Adrenal gland (tissue), 19 donors: ENCODE measurements at regions of chr21 and their contacts with region 1.

Region 1: GRCh38 chr21:28342212-28342810 is 650.4 kb downstream of the LTN1 start:
- DNase-seq: no peak
- H3K4me3 ChIP-seq: no peak overlapping the region
- H3K27ac ChIP-seq: no peak overlapping the region
- H3K4me1 ChIP-seq: no peaks in the 10 kb centered on the region
- H3K27me3 ChIP-seq: no peaks in the 10 kb centered on the region
- CTCF ChIP-seq: no peak
- POLR2A ChIP-seq: no peak

Region 2: DNA sequence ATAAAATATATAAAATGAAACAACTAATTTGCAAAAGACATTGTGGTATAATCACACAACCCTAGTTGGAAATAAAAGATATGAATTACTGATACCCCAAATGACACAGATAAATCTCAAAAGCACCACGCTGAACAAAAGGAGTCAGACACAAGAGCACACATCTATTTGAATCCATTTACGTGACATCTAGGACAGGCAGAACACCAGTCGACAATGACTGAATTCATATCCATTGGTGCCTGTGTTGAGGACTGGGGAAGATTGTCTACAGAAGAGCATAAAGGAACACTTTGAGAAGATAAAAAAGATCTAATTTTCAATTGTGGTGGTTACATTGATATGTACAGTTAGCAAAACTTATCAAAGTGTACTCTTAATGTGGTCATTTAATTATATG is 223.7 kb before region 1 on chr21:
- intact Hi-C with region 1: no loop called
- DNase-seq: no peak
- H3K4me3 ChIP-seq: no peak overlapping the region
- H3K27ac ChIP-seq: no peak overlapping the region
- H3K4me1 ChIP-seq: no peaks in the 10 kb centered on the region
- H3K27me3 ChIP-seq: no peaks in the 10 kb centered on the region
- CTCF ChIP-seq: no peak
- POLR2A ChIP-seq: no peak

Region 3: DNA sequence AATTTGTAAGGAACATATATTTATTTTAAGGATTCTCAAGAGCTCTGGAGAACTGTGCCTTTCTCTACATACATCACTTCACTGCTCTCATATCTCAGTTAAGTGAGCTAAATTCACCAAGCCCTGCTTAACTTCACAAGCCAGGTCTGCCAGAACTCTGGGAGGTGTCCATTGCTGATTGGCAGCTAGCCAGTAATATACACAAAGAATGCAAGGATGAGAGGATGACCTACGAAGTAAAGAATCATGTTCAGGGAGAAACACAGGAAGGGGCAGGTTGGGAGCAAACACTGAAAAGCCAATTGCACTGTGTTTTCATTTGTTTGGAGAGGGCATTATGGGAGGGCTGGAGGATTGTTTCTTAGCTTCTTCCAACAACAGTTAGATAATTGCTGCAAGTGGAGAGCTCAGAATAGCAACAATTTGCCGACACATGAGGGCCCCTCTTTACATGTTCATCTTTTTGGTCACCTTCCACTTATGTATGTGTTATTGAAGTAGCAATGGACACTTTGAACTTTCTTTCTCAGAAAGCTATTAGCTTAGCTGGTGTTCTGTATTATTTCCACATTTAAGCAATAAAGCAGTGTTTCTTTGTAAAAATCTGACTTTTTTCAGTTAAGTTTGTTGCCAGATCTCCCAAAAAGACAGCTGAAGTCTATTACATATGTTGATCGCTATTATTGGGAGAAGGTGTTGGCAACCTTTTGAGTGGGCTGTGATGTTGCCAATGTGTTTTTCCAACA is 395.5 kb after region 1 on chr21:
- intact Hi-C with region 1: loop called in 1 of 2 experiments (anchors 10 kb)
- DNase-seq: no peak
- H3K4me3 ChIP-seq: no peak overlapping the region
- H3K27ac ChIP-seq: no peak overlapping the region
- H3K4me1 ChIP-seq: no peaks in the 10 kb centered on the region
- H3K27me3 ChIP-seq: no peaks in the 10 kb centered on the region
- CTCF ChIP-seq: no peak
- POLR2A ChIP-seq: no peak